ENCODE measurements at regions of chr20 and their contacts with region 1.

Region 1: DNA sequence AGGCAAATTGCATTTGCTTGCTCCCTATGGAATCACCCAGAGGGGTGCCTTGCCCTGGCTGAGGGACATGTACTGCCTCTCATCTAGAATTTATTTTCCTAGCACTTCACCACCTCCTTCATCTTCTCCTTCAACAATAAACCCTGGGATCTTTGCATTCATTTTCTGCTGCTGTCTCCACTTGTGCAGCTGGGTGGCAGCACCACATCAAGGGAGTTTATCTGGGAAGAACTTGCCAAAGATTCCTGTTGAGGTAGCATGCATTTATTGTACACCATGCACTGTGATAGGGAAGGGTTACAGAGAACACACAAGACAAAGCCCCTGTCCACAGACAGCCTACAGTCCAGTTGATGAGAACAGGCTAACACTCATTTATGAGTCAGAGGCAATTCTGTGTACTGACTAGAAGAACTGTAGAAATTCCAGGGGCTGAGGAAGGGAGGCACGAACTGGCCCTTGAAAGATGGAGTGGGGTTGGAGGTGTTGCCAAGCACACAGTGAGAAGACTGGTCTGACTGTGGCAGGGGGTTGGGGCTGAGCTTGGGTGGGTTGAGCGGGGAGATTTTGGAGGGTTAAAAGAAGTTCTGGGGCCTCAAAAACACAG is 17.5 kb downstream of the C20orf173 start:
- DNase-seq: peak; percentile 64
- H3K27ac ChIP-seq: peak overlapping the region; percentile 19
- CTCF ChIP-seq: peak; percentile 92

Region 2: GRCh38 chr20:35497780-35498189 is 14.1 kb before region 1 on chr20:
- CTCF ChIA-PET with region 1: interaction called, 16 read pairs
- POLR2A ChIA-PET with region 1: no interaction called
- DNase-seq: no peak
- H3K27ac ChIP-seq: no peak overlapping the region
- CTCF ChIP-seq: no peak

Measured in RWPE1 (cell line).